Activated CD8-positive, alpha-beta T cell treated with anti-CD3 and anti-CD28 coated beads for 36 hours (primary cell): ENCODE measurements at regions of chr14 and their contacts with region 1.

Region 1: DNA sequence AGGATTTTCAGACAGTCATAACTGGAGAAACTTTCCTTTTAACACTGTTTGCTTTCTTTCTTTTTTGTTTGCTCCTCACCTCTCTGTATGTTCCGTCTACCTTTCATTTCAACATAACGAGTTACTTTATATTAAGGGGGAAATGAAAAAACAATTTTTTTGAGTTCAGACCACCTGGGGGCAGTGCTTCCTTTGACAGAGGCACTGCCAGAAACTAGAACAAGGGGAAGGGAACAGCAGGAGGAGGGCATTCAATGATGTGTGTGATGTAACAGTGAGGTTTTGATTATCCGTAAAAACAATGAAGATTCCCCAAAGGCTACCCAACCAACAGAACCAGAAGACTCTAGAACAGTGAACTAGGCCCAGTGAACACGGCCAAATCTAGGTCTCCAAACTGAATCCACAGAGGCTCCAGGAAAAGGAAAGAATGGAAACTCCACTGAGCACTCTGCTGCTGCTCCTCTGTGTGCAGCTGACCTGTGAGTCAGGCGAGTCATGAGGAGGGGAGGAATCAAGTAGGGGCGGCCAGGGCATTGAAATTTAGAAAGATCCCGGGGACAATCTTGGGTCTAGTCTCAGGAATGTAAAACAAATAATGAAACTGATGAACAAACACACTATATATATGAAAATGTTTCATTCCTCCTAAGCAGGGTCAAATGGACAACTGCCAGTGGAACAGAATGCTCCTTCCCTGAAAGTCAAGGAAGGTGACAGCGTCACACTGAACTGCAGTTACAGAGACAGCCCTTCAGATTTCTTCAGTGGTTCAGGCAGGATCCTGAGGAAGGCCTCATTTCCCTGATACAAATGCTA is 323.5 kb downstream of the DAD1 start:
- DNase-seq: no peak
- ATAC-seq: peak; percentile 34
- H3K4me3 Mint-ChIP-seq: peak overlapping the region; percentile 50
- H3K27ac Mint-ChIP-seq: peak overlapping the region; percentile 52
- H3K4me1 Mint-ChIP-seq: peaks cover 2% of the 10 kb centered on the region
- H3K27me3 Mint-ChIP-seq: no peaks in the 10 kb centered on the region
- CTCF ChIP-seq: no peak

Region 2: DNA sequence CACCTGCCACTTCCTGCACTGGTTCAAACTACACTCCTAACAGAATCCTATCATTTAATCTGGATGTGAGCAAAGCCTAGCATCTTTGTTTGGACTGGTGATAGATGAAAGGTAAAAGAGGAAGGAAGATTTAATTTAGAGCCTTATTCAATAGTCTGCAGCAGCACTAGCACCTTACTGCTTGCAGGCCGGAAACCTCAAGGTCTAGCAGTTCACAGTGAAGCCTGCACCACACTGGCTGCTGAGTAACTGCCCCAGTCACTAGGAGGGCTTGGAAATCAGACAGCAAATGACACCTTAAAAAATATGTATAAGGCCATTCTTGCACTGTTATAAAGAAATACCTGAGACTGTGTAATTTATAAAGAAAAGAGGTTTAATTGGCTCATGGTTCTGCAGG is 34.5 kb before region 1 on chr14:
- CTCF ChIA-PET with region 1: no interaction called
- POLR2A ChIA-PET with region 1: no interaction called
- intact Hi-C with region 1: loop called (anchors 5 kb)
- DNase-seq: peak; percentile 16
- ATAC-seq: peak; percentile 66
- H3K4me3 Mint-ChIP-seq: peak overlapping the region; percentile 48
- H3K27ac Mint-ChIP-seq: peak overlapping the region; percentile 30
- H3K4me1 Mint-ChIP-seq: peaks cover 11% of the 10 kb centered on the region
- H3K27me3 Mint-ChIP-seq: no peaks in the 10 kb centered on the region
- CTCF ChIP-seq: no peak

Region 3: DNA sequence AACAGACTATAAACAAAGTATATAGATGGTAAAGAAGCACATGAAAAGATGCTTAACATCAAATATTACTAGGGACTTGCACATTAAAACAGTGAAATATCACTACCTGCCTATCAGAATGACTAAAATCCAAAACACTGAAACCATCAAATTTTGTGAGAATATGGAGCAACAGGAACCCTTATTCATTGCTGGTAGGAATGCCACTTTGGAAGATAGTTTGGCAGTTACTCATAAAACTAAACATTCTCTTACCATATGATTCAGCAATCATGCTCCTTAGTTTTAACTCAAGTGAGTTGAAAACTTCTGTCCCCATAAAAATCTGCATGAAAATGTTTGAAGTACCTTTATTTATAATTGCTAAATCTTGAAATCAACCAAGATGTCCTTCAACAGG is 25.9 kb after region 1 on chr14:
- CTCF ChIA-PET with region 1: no interaction called
- POLR2A ChIA-PET with region 1: no interaction called
- intact Hi-C with region 1: no loop called
- DNase-seq: no peak
- ATAC-seq: no peak
- H3K4me3 Mint-ChIP-seq: no peak overlapping the region
- H3K27ac Mint-ChIP-seq: no peak overlapping the region
- H3K4me1 Mint-ChIP-seq: no peaks in the 10 kb centered on the region
- H3K27me3 Mint-ChIP-seq: no peaks in the 10 kb centered on the region
- CTCF ChIP-seq: no peak